ENCODE measurements at regions of chr19 and their contacts with region 1.

Region 1: DNA sequence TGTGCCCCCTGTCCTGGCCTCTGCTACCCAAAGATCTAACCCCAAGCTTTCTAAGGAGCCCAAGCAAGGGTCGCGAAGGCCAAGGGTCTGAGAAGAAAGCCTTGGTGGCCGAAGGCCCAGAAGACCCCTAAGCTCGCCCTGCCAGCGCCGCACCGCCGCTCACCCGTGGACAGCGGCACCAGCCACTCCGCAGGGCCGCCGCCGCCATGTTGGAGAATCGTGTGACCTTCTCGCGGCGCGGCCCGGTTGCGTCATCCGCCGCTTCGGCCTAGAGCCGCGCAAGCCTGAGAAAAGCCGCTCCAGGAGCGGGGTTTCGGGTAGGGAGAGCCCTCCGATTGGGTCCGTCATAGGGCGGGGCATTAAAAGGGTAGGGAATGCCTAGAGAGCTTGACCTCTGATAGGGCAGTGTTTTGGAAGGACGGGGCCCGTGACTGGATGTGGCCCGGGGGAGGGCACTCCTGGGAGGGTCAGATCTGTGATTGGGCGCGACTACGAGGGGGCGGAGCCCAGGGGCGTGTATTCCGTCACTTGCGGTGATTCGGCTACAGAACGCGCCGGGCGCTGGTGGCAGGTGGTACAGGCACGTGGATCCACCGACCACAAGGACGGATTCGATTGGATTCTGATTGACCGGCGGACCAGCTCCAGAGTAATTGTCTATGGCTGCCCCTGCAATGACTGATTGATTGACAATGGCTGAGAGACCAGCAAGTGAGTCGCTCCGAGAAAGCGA is at the start of gene TIMM44:
- DNase-seq: peak; percentile 99 to 100 (median 100)
- H3K4me3 ChIP-seq: peak within 1 kb of the TSS; percentile 61 to 100 (median 96)
- H3K27ac ChIP-seq: peak within 1 kb of the TSS; percentile 76 to 99 (median 93)
- H3K27me3 ChIP-seq: no peaks in the 10 kb centered on the region
- CTCF ChIP-seq: peak in 1 of 56 donors; percentile 9
- total RNA-seq, gene TIMM44: 34.5 to 109 (median 53.7) TPM

Region 2: DNA sequence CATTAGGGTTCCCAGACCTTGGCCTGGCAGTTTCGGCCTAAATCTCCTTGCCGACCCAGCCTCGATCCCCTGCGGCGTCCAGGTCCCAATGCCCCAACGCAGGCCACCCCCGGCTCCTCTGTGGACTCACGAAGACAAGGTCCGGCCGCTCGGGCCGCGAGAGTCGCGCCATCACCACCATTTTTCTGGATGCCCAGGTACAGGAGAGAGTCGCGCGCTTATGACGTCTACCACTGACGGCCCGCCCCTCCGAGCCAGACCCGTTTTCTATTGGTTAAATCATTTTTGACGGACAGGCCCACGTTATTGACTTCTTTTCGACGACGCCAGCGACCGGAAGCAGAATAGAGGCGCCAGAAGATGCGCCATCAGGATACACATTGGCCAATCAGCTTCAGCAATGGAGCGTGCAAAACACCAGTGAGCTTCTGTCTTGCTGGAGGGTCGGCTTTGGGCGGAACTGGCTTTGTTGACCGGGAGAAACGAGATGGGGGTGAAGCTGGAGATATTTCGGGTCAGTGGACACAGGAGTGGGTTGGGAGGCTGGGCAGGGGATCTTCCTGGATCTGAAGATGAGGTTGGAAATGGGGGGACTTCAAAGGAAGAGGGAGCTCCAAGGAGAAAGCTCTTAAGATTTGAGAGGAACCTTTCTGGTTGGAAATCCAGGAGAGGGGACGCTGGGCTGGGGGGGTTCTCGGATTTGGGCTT is 314.1 kb before region 1 on chr19 and contains the starts of genes PET100 and XAB2:
- intact Hi-C with region 1: no loop called
- DNase-seq: peak; percentile 95 to 99 (median 98)
- H3K4me3 ChIP-seq: peak within 1 kb of the TSS; percentile 71 to 100 (median 92)
- H3K27ac ChIP-seq: peak within 1 kb of the TSS in 49 of 59 donors; percentile 15 to 90 (median 72)
- H3K27me3 ChIP-seq: no peaks in the 10 kb centered on the region
- CTCF ChIP-seq: peak in 17 of 56 donors; percentile 8 to 56 (median 25)
- total RNA-seq, gene PET100: 33.4 to 159 (median 92.2) TPM
- total RNA-seq, gene XAB2: 30.8 to 56.2 (median 38.7) TPM

Region 3: GRCh38 chr19:7919610-7920518 is 23.7 kb before region 1 on chr19 and contains the start of gene SNAPC2:
- intact Hi-C with region 1: loop called in 1 of 2 experiments (anchors 1 kb)
- DNase-seq: peak; percentile 86 to 95 (median 90)
- H3K4me3 ChIP-seq: peak within 1 kb of the TSS; percentile 59 to 90 (median 77)
- H3K27ac ChIP-seq: peak within 1 kb of the TSS; percentile 66 to 98 (median 92)
- H3K27me3 ChIP-seq: peaks cover 0 to 41% (median 21%) of the 10 kb centered on the region in 45 donors
- CTCF ChIP-seq: peak in 32 of 56 donors; percentile 11 to 45 (median 26)
- total RNA-seq, gene SNAPC2: 11.3 to 27.9 (median 16.9) TPM

Region 4: GRCh38 chr19:8005534-8006256 is 62.1 kb after region 1 on chr19 and contains the start of gene ELAVL1:
- intact Hi-C with region 1: loop called (anchors 1 to 5 kb)
- DNase-seq: peak; percentile 72 to 94 (median 84)
- H3K4me3 ChIP-seq: peak within 1 kb of the TSS; percentile 73 to 99 (median 92)
- H3K27ac ChIP-seq: peak within 1 kb of the TSS in 56 of 59 donors; percentile 27 to 94 (median 81)
- H3K27me3 ChIP-seq: no peaks in the 10 kb centered on the region
- CTCF ChIP-seq: peak in 18 of 56 donors; percentile 9 to 47 (median 24)
- total RNA-seq, gene ELAVL1: 43.9 to 65.7 (median 53.2) TPM

Region 5: GRCh38 chr19:8158411-8159074 is 214.9 kb after region 1 on chr19:
- intact Hi-C with region 1: loop called in 1 of 2 experiments (anchors 10 kb)
- DNase-seq: peak in 5 of 10 donors; percentile 35 to 73 (median 45)
- H3K4me3 ChIP-seq: no peak overlapping the region
- H3K27ac ChIP-seq: peak overlapping the region in 11 of 59 donors; percentile 7 to 60 (median 31)
- H3K27me3 ChIP-seq: no peaks in the 10 kb centered on the region
- CTCF ChIP-seq: peak; percentile 69 to 93 (median 83)

Region 6: DNA sequence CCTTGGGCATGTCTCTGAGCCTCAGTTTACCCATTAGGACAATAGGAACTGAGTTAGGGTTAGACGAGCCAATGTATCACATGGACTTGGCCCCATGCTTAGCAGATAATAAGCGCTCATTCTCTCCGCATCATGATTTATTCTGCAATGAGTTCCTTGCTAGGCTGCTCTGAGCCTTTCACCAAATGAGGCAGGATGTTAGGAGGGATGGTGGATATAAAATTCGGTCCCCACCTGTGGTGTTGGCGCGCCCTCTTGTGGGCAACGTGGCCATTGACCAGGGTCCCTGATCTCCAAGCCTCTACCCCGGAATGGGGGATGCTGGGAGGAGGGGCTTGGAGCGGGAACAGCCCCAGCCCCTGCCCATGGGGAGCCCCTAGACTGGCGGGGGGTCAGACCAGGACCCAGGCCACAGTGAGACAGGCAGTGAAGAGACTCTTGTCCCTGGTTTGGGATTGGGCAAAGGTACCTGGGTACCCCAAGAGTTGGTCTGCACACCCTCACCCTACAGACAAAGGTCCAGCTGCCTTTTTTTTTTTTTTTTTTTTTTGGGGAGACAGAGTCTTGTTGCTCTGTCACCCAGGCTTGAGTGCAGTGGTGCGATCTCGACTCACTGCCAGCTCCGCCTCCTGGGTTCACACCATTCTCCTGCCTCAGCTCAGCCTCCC is 309.4 kb after region 1 on chr19:
- intact Hi-C with region 1: loop called (anchors 2 to 5 kb)
- DNase-seq: peak; percentile 71 to 89 (median 84)
- H3K4me3 ChIP-seq: no peak overlapping the region
- H3K27ac ChIP-seq: peak overlapping the region in 34 of 59 donors; percentile 2 to 89 (median 36)
- H3K27me3 ChIP-seq: no peaks in the 10 kb centered on the region
- CTCF ChIP-seq: peak; percentile 89 to 99 (median 97)

Region 7: GRCh38 chr19:8321060-8321985 is 377.7 kb after region 1 on chr19 and contains the starts of genes NDUFA7 and RPS28:
- intact Hi-C with region 1: loop called in 1 of 2 experiments (anchors 5 kb)
- DNase-seq: peak; percentile 96 to 99 (median 98)
- H3K4me3 ChIP-seq: peak within 1 kb of the TSS; percentile 70 to 100 (median 95)
- H3K27ac ChIP-seq: peak within 1 kb of the TSS; percentile 37 to 98 (median 91)
- H3K27me3 ChIP-seq: no peaks in the 10 kb centered on the region
- CTCF ChIP-seq: peak; percentile 25 to 80 (median 54)
- total RNA-seq, gene NDUFA7: 16.2 to 82.8 (median 42.0) TPM
- total RNA-seq, gene RPS28: 395 to 973 (median 613) TPM

Region 8: GRCh38 chr19:8513687-8514504 is 570.3 kb after region 1 on chr19 and contains the start of gene ZNF414:
- intact Hi-C with region 1: loop called in 1 of 2 experiments (anchors 5 kb)
- DNase-seq: peak; percentile 93 to 97 (median 95)
- H3K4me3 ChIP-seq: peak within 1 kb of the TSS; percentile 61 to 96 (median 81)
- H3K27ac ChIP-seq: peak within 1 kb of the TSS; percentile 93 to 100 (median 100)
- H3K27me3 ChIP-seq: no peaks in the 10 kb centered on the region
- CTCF ChIP-seq: peak in 17 of 56 donors; percentile 2 to 40 (median 17)
- total RNA-seq, gene ZNF414: 19.4 to 51.4 (median 30.1) TPM